ENCODE measurements at regions of chr4 and their contacts with region 1.

Region 1: GRCh38 chr4:107930821-107931774 is at the start of gene CYP2U1:
- DNase-seq: peak; percentile 91 to 93
- ATAC-seq: peak; percentile 97 to 98 (median 98)
- H3K4me3 ChIP-seq: peak within 1 kb of the TSS; percentile 92
- H3K27ac ChIP-seq: peak within 1 kb of the TSS; percentile 82
- H3K4me1 ChIP-seq: peaks cover 34% of the 10 kb centered on the region
- H3K27me3 ChIP-seq: no peaks in the 10 kb centered on the region
- CTCF ChIP-seq: peak; percentile 29
- total RNA-seq, gene CYP2U1: 2.4 to 4.5 (median 3.9) TPM

Region 2: GRCh38 chr4:107978716-107979451 is 47.8 kb after region 1 on chr4:
- intact Hi-C with region 1: no loop called
- DNase-seq: no peak
- ATAC-seq: peak in 3 of 4 donors; percentile 70 to 82 (median 80)
- H3K4me3 ChIP-seq: no peak overlapping the region
- H3K27ac ChIP-seq: no peak overlapping the region
- H3K4me1 ChIP-seq: peaks cover 9% of the 10 kb centered on the region
- H3K27me3 ChIP-seq: no peaks in the 10 kb centered on the region
- CTCF ChIP-seq: no peak

Region 3: GRCh38 chr4:107989537-107990386 is 58.7 kb after region 1 on chr4 and contains the start of gene HADH:
- intact Hi-C with region 1: loop called (anchors 2 kb)
- DNase-seq: peak; percentile 95 to 96
- ATAC-seq: peak; percentile 96 to 100 (median 98)
- H3K4me3 ChIP-seq: peak within 1 kb of the TSS; percentile 91
- H3K27ac ChIP-seq: peak within 1 kb of the TSS; percentile 98
- H3K4me1 ChIP-seq: peaks cover 50% of the 10 kb centered on the region
- H3K27me3 ChIP-seq: no peaks in the 10 kb centered on the region
- CTCF ChIP-seq: no peak
- total RNA-seq, gene HADH: 84.4 to 150 (median 118) TPM

Region 4: GRCh38 chr4:108345862-108346817 is 415.0 kb after region 1 on chr4:
- intact Hi-C with region 1: no loop called
- DNase-seq: no peak
- ATAC-seq: no peak
- H3K4me3 ChIP-seq: no peak overlapping the region
- H3K27ac ChIP-seq: no peak overlapping the region
- H3K4me1 ChIP-seq: no peaks in the 10 kb centered on the region
- H3K27me3 ChIP-seq: peaks cover 0 to 2% (median 0%) of the 10 kb centered on the region in 3 donors
- CTCF ChIP-seq: no peak

Measured in psoas muscle (tissue), 8 donors.